ENCODE measurements at regions of chr17 and their contacts with region 1.

Region 1: GRCh38 chr17:9859781-9860180 is 34.1 kb downstream of the GLP2R start:
- DNase-seq: no peak
- ATAC-seq: no peak
- H3K4me3 ChIP-seq: no peak overlapping the region
- H3K27ac ChIP-seq: no peak overlapping the region
- H3K4me1 ChIP-seq: no peaks in the 10 kb centered on the region
- H3K27me3 ChIP-seq: no peaks in the 10 kb centered on the region
- CTCF ChIP-seq: no peak

Region 2: DNA sequence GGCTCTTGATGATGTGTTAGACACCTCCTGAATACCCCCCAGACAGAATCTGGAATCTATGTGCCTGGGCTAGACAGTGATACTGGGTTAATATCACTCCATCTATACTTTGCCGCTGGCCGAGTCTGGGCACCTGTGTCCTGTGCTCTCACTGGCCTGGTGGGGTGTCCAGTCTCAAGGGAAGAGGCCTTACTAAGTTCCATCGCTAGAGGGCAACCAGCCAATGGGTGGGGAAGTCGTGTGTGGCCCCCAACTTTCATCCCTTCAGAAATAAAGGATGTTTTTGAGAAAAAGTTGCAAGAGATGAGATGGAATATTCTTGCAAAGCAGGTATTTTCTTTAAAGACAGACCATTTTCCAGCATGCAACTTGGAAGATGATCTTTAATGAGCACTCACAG is 35.7 kb before region 1 on chr17:
- intact Hi-C with region 1: loop called in 1 of 2 experiments (anchors 5 kb)
- DNase-seq: no peak
- ATAC-seq: no peak
- H3K4me3 ChIP-seq: no peak overlapping the region
- H3K27ac ChIP-seq: no peak overlapping the region
- H3K4me1 ChIP-seq: no peaks in the 10 kb centered on the region
- H3K27me3 ChIP-seq: no peaks in the 10 kb centered on the region
- CTCF ChIP-seq: no peak

Region 3: DNA sequence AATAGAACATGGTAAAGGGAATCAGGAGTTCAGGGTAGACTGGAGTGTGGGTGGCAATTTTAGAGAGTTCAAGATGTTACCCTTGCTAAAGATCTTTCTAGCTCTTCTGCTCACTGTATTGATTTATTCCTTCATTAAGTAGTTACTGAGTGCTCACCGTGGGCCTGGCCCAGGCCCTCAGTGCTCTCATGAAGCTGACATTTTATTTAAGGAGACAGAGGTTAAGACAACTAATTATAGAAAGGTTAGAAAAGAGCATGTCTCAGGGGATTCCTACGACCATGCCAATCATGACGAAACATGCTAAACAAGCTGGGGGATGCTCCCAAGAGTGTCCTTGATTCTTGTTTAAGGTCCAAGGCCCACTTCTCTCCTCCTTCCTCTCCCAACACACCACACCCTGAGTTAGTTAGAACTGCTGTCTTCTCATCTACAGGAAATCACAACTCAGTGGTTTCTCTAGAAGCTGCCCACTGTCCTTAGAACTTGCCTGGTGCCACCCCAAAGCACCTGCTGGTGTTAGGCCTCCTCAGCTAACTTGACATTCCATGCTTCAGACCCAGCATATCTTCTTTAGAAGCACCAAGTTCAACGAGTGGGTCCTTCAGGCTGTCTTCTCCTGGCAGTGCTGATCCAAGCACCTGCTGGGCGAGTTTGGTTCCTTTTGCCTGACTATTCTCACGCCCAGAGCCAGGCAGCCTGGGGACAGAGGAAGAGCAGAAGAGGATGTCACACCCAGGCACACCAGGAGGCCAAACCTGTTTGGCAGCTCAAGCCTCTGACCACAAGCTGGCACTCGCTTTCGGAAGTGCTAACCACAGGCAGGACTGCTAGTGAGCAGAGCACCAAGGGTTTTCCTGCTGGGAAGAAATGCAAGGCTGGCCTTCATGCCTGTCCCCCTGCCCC is 259.7 kb after region 1 on chr17:
- intact Hi-C with region 1: no loop called
- DNase-seq: peak in 1 of 2 donors; percentile 57
- ATAC-seq: no peak
- H3K4me3 ChIP-seq: no peak overlapping the region
- H3K27ac ChIP-seq: no peak overlapping the region
- H3K4me1 ChIP-seq: peaks cover 4% of the 10 kb centered on the region
- H3K27me3 ChIP-seq: peaks cover 0 to 2% (median 0%) of the 10 kb centered on the region in 3 donors
- CTCF ChIP-seq: no peak